MCF 10A (cell line): ENCODE measurements at regions of chr10 and their contacts with region 1.

Region 1: GRCh38 chr10:114631666-114632417 is 26.2 kb downstream of the ABLIM1 start:
- DNase-seq: no peak
- H3K4me3 Mint-ChIP-seq: peak overlapping the region; percentile 73
- H3K27ac Mint-ChIP-seq: no peak overlapping the region
- H3K4me1 Mint-ChIP-seq: peaks cover 64% of the 10 kb centered on the region
- H3K27me3 Mint-ChIP-seq: no peaks in the 10 kb centered on the region
- CTCF ChIP-seq: no peak

Region 2: GRCh38 chr10:114648368-114648767 is 16.5 kb after region 1 on chr10:
- CTCF ChIA-PET with region 1: interaction called, 6 read pairs
- POLR2A ChIA-PET with region 1: interaction called, 39 read pairs
- intact Hi-C with region 1: no loop called
- DNase-seq: peak; percentile 69
- H3K4me3 Mint-ChIP-seq: peak overlapping the region; percentile 6
- H3K27ac Mint-ChIP-seq: peak overlapping the region; percentile 21
- H3K4me1 Mint-ChIP-seq: peaks cover 25% of the 10 kb centered on the region
- H3K27me3 Mint-ChIP-seq: no peaks in the 10 kb centered on the region
- CTCF ChIP-seq: no peak

Region 3: GRCh38 chr10:114662646-114663217 is 30.9 kb after region 1 on chr10:
- CTCF ChIA-PET with region 1: no interaction called
- POLR2A ChIA-PET with region 1: no interaction called
- intact Hi-C with region 1: no loop called
- DNase-seq: no peak
- H3K4me3 Mint-ChIP-seq: no peak overlapping the region
- H3K27ac Mint-ChIP-seq: no peak overlapping the region
- H3K4me1 Mint-ChIP-seq: no peaks in the 10 kb centered on the region
- H3K27me3 Mint-ChIP-seq: no peaks in the 10 kb centered on the region
- CTCF ChIP-seq: no peak

Region 4: GRCh38 chr10:114694752-114695151 is 62.9 kb after region 1 on chr10:
- CTCF ChIA-PET with region 1: interaction called, 3 read pairs
- POLR2A ChIA-PET with region 1: interaction called, 20 read pairs
- intact Hi-C with region 1: no loop called
- DNase-seq: peak; percentile 60
- H3K4me3 Mint-ChIP-seq: no peak overlapping the region
- H3K27ac Mint-ChIP-seq: no peak overlapping the region
- H3K4me1 Mint-ChIP-seq: peaks cover 42% of the 10 kb centered on the region
- H3K27me3 Mint-ChIP-seq: no peaks in the 10 kb centered on the region
- CTCF ChIP-seq: peak; percentile 38

Region 5: GRCh38 chr10:114767101-114767985 is 135.5 kb after region 1 on chr10:
- CTCF ChIA-PET with region 1: interaction called, 3 read pairs
- POLR2A ChIA-PET with region 1: interaction called, 3 read pairs
- intact Hi-C with region 1: loop called (anchors 5 kb)
- DNase-seq: peak; percentile 52
- H3K4me3 Mint-ChIP-seq: peak overlapping the region; percentile 74
- H3K27ac Mint-ChIP-seq: no peak overlapping the region
- H3K4me1 Mint-ChIP-seq: peaks cover 9% of the 10 kb centered on the region
- H3K27me3 Mint-ChIP-seq: no peaks in the 10 kb centered on the region
- CTCF ChIP-seq: no peak

Region 6: DNA sequence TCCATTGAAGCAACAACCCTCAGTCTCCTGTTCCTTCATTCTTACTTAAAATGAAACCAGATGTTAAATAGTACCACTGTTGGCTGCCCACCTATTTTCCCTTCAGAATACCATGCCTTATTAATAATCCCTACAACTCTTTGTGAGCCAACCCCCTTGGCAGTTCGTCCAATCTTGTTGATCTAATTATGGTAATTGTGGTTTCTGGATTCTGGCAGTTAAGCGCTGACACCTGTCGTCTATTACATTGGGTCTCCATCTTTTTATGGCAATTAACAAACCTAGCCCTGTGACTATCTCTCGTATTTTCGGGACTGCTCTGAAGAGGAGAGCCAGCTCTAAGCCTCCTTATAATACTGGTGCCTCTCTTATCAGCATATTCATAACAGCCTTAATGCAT is 893.3 kb after region 1 on chr10:
- CTCF ChIA-PET with region 1: no interaction called
- POLR2A ChIA-PET with region 1: no interaction called
- intact Hi-C with region 1: no loop called
- DNase-seq: no peak
- H3K4me3 Mint-ChIP-seq: no peak overlapping the region
- H3K27ac Mint-ChIP-seq: no peak overlapping the region
- H3K4me1 Mint-ChIP-seq: no peaks in the 10 kb centered on the region
- H3K27me3 Mint-ChIP-seq: peaks cover 34% of the 10 kb centered on the region
- CTCF ChIP-seq: no peak